ENCODE measurements at regions of chr10 and their contacts with region 1.

Region 1: GRCh38 chr10:16384023-16384422 is 52.8 kb upstream of the PTER start:
- DNase-seq: no peak
- ATAC-seq: no peak
- H3K4me3 ChIP-seq: no peak overlapping the region
- H3K4me3 Mint-ChIP-seq: no peak overlapping the region
- H3K27ac ChIP-seq: no peak overlapping the region
- H3K27ac Mint-ChIP-seq: no peak overlapping the region
- H3K4me1 ChIP-seq: no peaks in the 10 kb centered on the region
- H3K4me1 Mint-ChIP-seq: no peaks in the 10 kb centered on the region
- H3K27me3 ChIP-seq: peaks cover 0 to 2% of the 10 kb centered on the region in 2 experiments
- H3K27me3 Mint-ChIP-seq: peaks cover 2 to 5% of the 10 kb centered on the region in 2 donors

Region 2: GRCh38 chr10:17792991-17793390 is 1409.0 kb after region 1 on chr10:
- CTCF ChIA-PET with region 1: no interaction called
- POLR2A ChIA-PET with region 1: interaction called in 1 of 2 experiments, 11 read pairs
- DNase-seq: no peak
- ATAC-seq: no peak
- H3K4me3 ChIP-seq: no peak overlapping the region
- H3K4me3 Mint-ChIP-seq: no peak overlapping the region
- H3K27ac ChIP-seq: no peak overlapping the region
- H3K27ac Mint-ChIP-seq: no peak overlapping the region
- H3K4me1 ChIP-seq: no peaks in the 10 kb centered on the region
- H3K4me1 Mint-ChIP-seq: no peaks in the 10 kb centered on the region
- H3K27me3 ChIP-seq: no peaks in the 10 kb centered on the region
- H3K27me3 Mint-ChIP-seq: no peaks in the 10 kb centered on the region